ENCODE measurements at regions of chr11 and their contacts with region 1.

Region 1: GRCh38 chr11:72040726-72041441 is 39.5 kb downstream of the NUMA1 start:
- DNase-seq: peak; percentile 75
- H3K4me3 ChIP-seq: peak overlapping the region; percentile 64 to 67
- H3K27ac ChIP-seq: peak overlapping the region; percentile 97 to 99
- H3K4me1 ChIP-seq: peaks cover 18 to 45% of the 10 kb centered on the region in 2 experiments
- H3K27me3 ChIP-seq: no peaks in the 10 kb centered on the region
- CTCF ChIP-seq: no peak
- EP300 ChIP-seq: no peak
- RAD21 ChIP-seq: no peak

Region 2: GRCh38 chr11:72085621-72086351 is 44.9 kb after region 1 on chr11:
- CTCF ChIA-PET with region 1: interaction called, 30 read pairs
- POLR2A ChIA-PET with region 1: interaction called, 7 read pairs
- DNase-seq: no peak
- H3K4me3 ChIP-seq: no peak overlapping the region
- H3K27ac ChIP-seq: peak overlapping the region in 1 of 2 experiments; percentile 44; a peak in 2 of 4 replicates
- H3K4me1 ChIP-seq: peaks cover 0 to 39% of the 10 kb centered on the region in 2 experiments; a peak in 3 of 4 replicates
- H3K27me3 ChIP-seq: no peaks in the 10 kb centered on the region
- CTCF ChIP-seq: no peak
- EP300 ChIP-seq: no peak
- RAD21 ChIP-seq: no peak

Measured in SK-N-SH (cell line).